ENCODE measurements at regions of chr1 and their contacts with region 1.

Region 1: GRCh38 chr1:217322834-217323233 is 308.1 kb downstream of the GPATCH2 start:
- DNase-seq: peak; percentile 51
- CTCF ChIP-seq: no peak

Region 2: GRCh38 chr1:217333939-217334338 is 11.1 kb after region 1 on chr1:
- CTCF ChIA-PET with region 1: interaction called, 15 read pairs
- POLR2A ChIA-PET with region 1: no interaction called
- DNase-seq: peak; percentile 40
- CTCF ChIP-seq: peak; percentile 43

Measured in GM10248 (cell line).